G401 (cell line): ENCODE measurements at regions of chr7 and their contacts with region 1.

Region 1: GRCh38 chr7:151168003-151168786 is 701 bp upstream of the GBX1 start:
- DNase-seq: no peak

Region 2: DNA sequence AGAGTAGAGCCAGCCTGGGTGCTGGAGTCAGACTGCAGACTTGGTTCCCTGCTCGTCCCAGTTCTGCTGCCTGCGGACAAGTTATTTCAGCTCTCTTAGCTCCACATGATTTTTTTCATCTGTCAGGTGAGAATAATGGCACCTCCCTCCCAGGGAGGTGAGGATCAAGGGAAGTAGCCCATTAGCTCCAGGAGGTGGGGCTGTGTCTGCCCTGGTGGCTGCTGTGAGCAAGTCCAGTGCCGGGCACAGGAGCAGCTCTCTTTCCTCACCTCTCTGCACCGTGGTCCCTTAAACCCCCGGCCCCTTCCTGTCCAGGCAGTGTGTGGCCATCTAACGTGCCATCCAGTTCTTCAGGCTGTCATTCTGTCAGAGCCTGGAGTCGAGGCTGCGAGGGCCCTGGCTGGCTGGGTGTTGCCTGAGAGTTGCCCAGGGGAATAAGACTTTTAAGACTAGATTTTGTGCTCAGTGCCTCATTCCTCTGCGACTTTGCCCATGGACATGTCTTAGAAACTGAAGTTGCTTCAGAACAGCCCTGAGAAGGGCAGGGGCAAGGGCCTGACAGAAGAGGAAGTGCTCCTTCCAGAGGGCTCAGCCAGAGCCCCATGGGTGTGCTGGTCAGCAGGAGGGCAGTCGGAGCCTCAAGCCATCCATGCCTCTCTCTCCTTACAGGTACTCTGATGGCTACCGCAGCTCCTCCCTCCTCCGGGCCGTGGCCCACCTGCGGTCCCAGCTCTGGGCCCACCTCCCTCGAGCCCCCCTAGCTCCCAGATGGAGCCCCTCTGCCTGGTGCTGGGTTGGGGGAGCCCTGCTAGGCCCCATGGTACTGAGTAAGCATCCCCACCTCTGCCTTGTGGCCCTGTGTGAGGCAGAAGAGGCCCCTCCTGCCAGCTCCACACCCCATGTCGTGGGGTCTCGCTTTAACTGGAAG is 135.0 kb before region 1 on chr7:
- in situ Hi-C with region 1: loop called (anchors 5 kb)
- DNase-seq: no peak

Region 3: GRCh38 chr7:151232091-151232916 is 64.1 kb after region 1 on chr7 and contains the start of gene CHPF2:
- in situ Hi-C with region 1: no loop called
- DNase-seq: peak; percentile 91
- total RNA-seq, gene CHPF2: 22.3 and 31.1 TPM in 2 replicates